Activated CD4-positive, alpha-beta T cell treated with anti-CD3 and anti-CD28 coated beads for 36 hours (primary cell): ENCODE measurements at regions of chr15 and their contacts with region 1.

Region 1: DNA sequence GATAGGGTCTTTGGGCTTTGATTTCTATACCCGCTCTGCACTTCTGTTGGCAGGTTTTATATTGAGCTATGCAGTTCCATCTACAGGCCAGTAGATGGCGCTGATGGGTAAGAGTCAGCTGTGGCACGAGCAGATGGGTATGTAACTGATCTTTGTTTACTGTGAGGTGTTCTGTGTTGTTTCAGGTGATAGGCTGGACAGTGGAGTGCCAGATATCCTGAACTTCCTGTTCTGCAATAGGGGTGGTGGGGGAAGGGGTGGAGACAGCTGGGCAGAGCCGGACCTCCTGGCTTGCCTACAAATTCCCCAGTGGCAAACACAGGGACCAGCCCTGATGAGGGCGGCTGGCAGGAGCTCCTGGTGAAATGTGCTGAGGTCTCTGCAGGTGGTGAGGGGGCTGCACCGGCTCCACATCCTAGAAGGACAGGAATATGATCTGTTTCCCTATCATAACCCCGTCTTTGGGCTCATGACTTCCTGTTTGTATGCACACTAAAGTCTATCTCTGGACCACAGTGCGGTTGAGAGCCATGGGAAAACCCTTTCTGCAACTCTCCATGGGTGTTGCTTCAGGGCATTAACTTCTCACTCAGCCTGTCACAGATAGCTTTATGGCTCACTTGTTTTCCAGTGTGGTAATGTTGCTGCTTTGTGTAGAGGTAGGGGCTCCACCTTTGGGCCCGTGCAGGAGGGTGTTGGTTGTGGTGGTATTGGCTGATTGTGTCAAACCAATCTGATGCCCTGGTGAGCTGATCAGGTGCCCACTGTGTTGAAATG is 13.4 kb upstream of the FAM98B start:
- DNase-seq: peak; percentile 67
- ATAC-seq: peak; percentile 90
- H3K4me3 Mint-ChIP-seq: no peak overlapping the region
- H3K27ac Mint-ChIP-seq: peak overlapping the region; percentile 23
- H3K4me1 Mint-ChIP-seq: peaks cover 5% of the 10 kb centered on the region
- H3K27me3 Mint-ChIP-seq: peaks cover 14% of the 10 kb centered on the region

Region 2: DNA sequence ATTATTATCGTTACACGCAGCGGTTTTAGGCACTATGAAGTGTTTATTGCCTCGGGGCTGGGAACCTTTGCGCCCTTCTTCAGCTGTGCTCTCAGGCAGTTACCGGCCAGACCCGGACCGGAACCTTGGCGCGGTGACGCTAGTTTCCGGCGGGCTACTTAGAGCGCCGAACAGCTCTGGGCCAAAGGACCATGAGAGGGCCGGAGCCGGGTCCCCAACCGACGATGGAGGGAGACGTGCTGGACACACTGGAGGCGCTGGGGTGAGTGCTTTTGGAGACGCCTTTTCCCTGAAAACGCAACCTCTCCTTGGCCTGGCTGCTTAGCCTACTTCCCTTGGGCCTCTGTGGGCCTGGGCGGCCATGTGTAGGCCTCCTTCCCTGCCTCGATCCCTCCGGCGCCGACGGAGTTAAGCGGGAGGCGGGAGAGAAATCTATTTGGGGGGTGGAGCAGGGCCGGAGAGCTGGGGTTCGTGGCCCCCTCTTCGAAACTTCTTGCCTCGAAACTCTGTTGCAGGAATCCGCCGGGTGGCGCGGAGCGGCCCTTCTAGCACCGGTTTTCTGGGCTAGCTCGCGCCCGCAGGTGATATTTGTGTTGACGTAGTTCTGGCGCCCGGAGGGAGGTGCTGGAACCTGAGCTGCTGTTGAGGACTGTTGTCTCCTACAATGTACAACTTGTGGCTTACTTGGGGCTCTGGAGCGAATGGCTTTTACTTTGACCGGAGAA is 13.6 kb after region 1 on chr15 and contains the start of gene FAM98B:
- CTCF ChIA-PET with region 1: interaction called, 42 read pairs
- POLR2A ChIA-PET with region 1: interaction called, 3 read pairs
- intact Hi-C with region 1: no loop called
- DNase-seq: peak; percentile 92
- ATAC-seq: peak; percentile 92
- H3K4me3 Mint-ChIP-seq: peak within 1 kb of the TSS; percentile 78
- H3K27ac Mint-ChIP-seq: peak within 1 kb of the TSS; percentile 93
- H3K4me1 Mint-ChIP-seq: peaks cover 31% of the 10 kb centered on the region
- H3K27me3 Mint-ChIP-seq: no peaks in the 10 kb centered on the region
- total RNA-seq, gene FAM98B: 54.2 to 81.9 TPM

Region 3: DNA sequence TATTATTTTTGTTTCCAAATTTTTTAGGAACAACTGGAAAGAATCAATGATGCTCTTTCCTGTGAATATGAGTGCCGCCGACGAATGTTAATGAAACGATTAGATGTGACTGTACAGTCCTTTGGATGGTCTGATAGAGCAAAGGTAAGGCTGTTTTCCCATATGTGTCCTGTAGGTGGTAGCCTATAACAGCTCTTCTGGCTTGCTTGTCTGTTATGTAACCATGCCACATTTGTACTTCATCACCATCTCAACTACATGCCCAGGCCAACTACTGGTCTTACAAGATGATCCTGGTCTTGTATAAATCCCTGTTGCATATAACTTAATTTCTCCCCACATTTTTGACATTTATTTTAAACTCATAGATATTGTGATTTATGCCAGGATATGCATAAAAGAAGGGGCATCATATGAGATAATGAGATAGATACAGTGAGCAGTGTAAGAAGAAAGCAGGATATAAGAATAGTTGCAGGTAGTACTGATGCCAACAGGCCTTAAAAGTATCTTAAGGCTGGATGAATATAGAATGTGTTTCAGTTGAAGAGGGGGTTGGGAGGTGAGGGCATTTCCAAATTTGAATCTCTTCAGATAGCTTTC is 33.7 kb after region 1 on chr15:
- CTCF ChIA-PET with region 1: interaction called, 10 read pairs
- POLR2A ChIA-PET with region 1: no interaction called
- intact Hi-C with region 1: no loop called
- DNase-seq: peak; percentile 30
- ATAC-seq: peak; percentile 97
- H3K4me3 Mint-ChIP-seq: no peak overlapping the region
- H3K27ac Mint-ChIP-seq: no peak overlapping the region
- H3K4me1 Mint-ChIP-seq: peaks cover 11% of the 10 kb centered on the region
- H3K27me3 Mint-ChIP-seq: no peaks in the 10 kb centered on the region

Region 4: GRCh38 chr15:38531509-38531908 is 91.0 kb after region 1 on chr15:
- CTCF ChIA-PET with region 1: no interaction called
- POLR2A ChIA-PET with region 1: no interaction called
- intact Hi-C with region 1: no loop called
- DNase-seq: no peak
- ATAC-seq: no peak
- H3K4me3 Mint-ChIP-seq: no peak overlapping the region
- H3K27ac Mint-ChIP-seq: peak overlapping the region; percentile 82
- H3K4me1 Mint-ChIP-seq: peaks cover 98% of the 10 kb centered on the region
- H3K27me3 Mint-ChIP-seq: no peaks in the 10 kb centered on the region

Region 5: DNA sequence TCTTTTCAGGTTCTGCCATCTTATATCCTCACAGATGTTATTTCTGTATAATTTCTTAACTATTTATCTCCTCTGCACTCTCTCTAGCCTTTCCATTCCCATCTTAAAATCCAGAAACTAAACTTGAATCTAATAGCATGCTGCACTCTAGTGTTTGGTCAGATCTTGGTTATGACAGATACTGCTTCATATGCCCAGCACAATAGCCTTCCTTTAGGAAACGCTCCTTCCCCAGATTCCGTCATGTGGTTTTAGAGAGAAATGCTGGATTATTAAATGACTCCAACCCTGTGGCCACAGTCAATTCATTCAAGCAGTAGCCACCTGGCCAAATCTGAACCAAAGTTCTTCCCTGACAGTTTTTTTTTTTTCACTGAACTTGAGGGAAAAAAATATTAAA is 104.6 kb after region 1 on chr15:
- CTCF ChIA-PET with region 1: no interaction called
- POLR2A ChIA-PET with region 1: no interaction called
- intact Hi-C with region 1: no loop called
- DNase-seq: no peak
- ATAC-seq: no peak
- H3K4me3 Mint-ChIP-seq: no peak overlapping the region
- H3K27ac Mint-ChIP-seq: peak overlapping the region; percentile 53
- H3K4me1 Mint-ChIP-seq: peaks cover 94% of the 10 kb centered on the region
- H3K27me3 Mint-ChIP-seq: no peaks in the 10 kb centered on the region

Region 6: DNA sequence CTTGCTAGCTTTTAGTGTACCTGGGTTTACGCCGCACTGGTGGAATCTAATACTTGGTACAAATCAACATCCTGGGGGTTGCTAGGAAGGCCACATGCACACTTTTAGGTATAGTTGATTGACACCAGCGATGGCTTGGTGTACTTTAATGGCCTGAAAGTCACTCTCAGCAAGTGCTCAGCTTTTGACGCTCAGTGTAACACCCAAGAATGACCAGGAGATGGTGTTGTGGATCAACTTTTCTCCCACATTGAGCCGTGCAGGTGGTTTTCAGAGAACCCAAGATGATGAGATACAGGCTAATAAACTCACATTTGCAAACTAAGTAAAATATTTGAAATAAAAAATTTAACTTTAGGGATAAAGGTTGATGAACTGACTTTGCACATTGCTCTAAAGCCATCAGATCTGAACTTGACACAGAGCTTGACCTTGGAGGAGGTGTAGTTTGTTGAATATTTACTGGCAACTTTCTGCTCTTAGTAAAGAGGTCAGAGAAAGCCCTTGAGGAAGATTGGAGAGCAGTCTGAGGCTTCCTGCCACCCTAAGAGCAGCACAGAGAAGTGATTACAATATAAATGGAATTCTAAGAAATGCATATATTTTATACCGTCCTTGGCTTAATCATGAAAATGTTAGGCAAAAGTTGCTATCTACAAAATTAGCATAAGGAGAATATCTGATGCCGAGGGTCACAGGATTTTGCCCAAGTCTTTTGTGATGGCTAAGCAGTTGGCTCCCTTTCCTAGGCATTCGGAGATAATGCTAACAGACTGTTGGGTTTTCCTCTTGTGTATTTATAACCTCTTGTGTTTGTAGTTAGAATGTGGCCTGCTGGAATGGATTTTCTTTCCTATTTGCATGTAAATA is 267.5 kb after region 1 on chr15:
- CTCF ChIA-PET with region 1: interaction called, 58 read pairs
- POLR2A ChIA-PET with region 1: no interaction called
- intact Hi-C with region 1: no loop called
- DNase-seq: peak; percentile 48
- ATAC-seq: peak; percentile 91
- H3K4me3 Mint-ChIP-seq: no peak overlapping the region
- H3K27ac Mint-ChIP-seq: no peak overlapping the region
- H3K4me1 Mint-ChIP-seq: peaks cover 7% of the 10 kb centered on the region
- H3K27me3 Mint-ChIP-seq: no peaks in the 10 kb centered on the region

Region 7: DNA sequence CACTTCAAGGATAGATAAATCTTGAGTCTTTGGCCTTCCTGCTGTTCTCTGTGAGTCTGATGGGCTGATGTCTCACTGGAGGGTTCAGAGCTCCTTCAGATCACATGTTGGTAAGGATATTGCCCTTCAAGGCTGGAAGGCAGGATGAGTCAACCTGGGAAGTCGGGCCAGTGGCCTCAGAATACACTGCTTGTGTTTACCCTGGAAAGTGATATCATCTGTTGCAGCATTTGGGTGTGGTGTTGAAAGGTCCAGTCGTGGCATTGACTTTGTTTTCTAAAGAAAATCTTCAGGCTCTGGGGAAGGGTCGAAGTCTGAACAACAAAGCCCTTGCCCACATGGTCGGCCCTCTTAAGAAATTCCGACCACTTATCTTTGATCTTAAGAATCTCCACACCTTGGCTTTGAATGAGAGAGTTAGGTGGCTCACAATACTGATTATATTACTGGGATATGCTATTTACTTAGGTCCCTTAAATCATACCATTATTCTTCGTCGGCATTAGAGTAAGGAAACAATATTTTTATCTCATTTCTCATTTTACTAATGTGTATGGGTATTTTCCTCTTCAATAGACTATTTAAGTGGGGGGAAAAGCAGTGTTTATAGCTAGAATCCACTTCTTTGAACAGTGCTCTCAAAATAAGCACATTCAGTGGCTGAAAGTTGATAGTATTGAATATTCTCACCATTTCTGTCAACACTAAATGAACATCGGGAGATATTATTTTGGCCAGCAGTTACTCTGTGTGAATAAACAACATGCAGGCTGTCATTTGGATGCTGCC is 428.0 kb after region 1 on chr15:
- CTCF ChIA-PET with region 1: no interaction called
- POLR2A ChIA-PET with region 1: no interaction called
- intact Hi-C with region 1: loop called in 1 of 2 experiments (anchors 10 kb)
- DNase-seq: no peak
- ATAC-seq: no peak
- H3K4me3 Mint-ChIP-seq: no peak overlapping the region
- H3K27ac Mint-ChIP-seq: no peak overlapping the region
- H3K4me1 Mint-ChIP-seq: no peaks in the 10 kb centered on the region
- H3K27me3 Mint-ChIP-seq: peaks cover 4% of the 10 kb centered on the region